AG04449 (cell line): ENCODE measurements at regions of chr1 and their contacts with region 1.

Region 1: DNA sequence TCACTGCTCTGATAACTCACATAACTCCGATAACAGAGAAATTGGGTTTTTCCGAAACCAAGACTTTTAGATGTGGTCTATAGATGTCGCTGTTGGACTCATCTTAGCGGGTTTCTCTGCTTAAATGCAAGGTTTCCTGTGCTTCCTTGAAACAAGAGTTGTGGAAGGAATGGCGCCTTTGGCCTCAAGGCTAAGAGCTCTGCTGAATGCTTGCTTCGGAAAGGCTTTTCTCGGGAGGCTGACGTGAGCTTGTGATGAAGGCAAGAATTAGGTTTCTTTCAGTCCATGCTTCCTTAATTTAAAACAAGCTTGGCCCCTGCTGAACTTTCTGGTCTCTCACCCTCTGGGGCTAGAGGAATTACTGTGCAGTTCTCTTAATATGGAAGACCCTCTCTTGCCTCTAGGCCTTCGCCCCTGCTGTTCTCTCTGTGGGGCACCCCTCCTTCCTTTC is 113.5 kb downstream of the MAP3K21 start:
- DNase-seq: peak; percentile 7
- H3K4me3 ChIP-seq: no peak overlapping the region
- CTCF ChIP-seq: peak; percentile 56

Region 2: GRCh38 chr1:232784794-232785193 is 656.2 kb before region 1 on chr1:
- CTCF ChIA-PET with region 1: no interaction called
- POLR2A ChIA-PET with region 1: no interaction called
- DNase-seq: no peak
- H3K4me3 ChIP-seq: no peak overlapping the region
- CTCF ChIP-seq: no peak

Region 3: GRCh38 chr1:233790662-233791375 is 349.8 kb after region 1 on chr1:
- CTCF ChIA-PET with region 1: interaction called, 17 read pairs
- POLR2A ChIA-PET with region 1: no interaction called
- DNase-seq: peak; percentile 7
- H3K4me3 ChIP-seq: no peak overlapping the region
- CTCF ChIP-seq: peak; percentile 85

Region 4: GRCh38 chr1:234065794-234066447 is 624.9 kb after region 1 on chr1:
- CTCF ChIA-PET with region 1: interaction called, 30 read pairs
- POLR2A ChIA-PET with region 1: interaction called, 3 read pairs
- DNase-seq: no peak
- H3K4me3 ChIP-seq: no peak overlapping the region
- CTCF ChIP-seq: peak; percentile 81